Sigmoid colon (tissue), 7 donors: ENCODE measurements at regions of chr10 and their contacts with region 1.

Region 1: DNA sequence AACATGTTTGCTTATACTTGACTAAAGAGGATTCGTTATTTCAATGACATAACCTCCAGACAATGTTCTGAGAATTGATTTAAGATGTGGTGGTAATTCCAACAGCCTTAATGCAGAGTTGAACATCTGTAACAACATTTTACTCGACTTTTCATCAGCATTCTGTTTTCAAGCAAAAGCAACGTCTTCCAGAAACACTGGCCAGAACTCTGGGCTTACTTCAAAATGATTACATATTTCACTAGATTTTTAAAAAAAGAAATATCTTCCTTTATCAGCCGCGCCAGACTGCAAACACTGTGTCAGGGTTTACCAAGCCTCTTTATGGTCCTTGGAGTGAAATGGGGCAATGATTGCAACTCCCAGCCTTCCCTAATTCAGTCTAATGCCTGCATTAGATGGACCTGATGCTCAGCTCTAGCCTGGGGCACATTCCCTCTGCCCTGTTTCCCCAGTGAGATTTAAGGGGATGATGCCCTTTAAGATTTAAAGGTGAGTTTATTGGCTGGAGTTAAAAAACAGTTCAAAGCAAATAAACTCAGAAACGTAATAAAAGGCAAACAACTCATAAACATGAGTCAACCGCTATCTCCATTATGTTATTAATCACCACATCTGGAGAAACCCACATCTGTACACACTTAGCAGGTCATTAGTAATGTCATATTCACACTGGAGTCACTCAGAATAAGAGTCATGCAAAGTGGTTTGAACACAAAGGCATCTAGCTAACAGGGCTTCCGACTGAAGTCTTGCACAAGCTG is 663.9 kb downstream of the KCNMA1 start:
- DNase-seq: peak; percentile 77
- H3K4me3 ChIP-seq: no peak overlapping the region
- H3K27ac ChIP-seq: peak overlapping the region in 3 of 4 donors; percentile 70 to 76 (median 72)
- H3K4me1 ChIP-seq: peaks cover 0 to 89% (median 78%) of the 10 kb centered on the region in 4 donors
- H3K27me3 ChIP-seq: no peaks in the 10 kb centered on the region
- CTCF ChIP-seq: no peak
- EP300 ChIP-seq: peak in 2 of 4 donors; percentile 8 to 14
- POLR2A ChIP-seq: no peak

Region 2: GRCh38 chr10:76397181-76397881 is 576.4 kb before region 1 on chr10:
- intact Hi-C with region 1: loop called (anchors 1 kb)
- DNase-seq: peak; percentile 94
- H3K4me3 ChIP-seq: peak overlapping the region in 1 of 4 donors; percentile 2
- H3K27ac ChIP-seq: peak overlapping the region; percentile 75 to 83 (median 76)
- H3K4me1 ChIP-seq: peaks cover 0 to 61% (median 32%) of the 10 kb centered on the region in 4 donors
- H3K27me3 ChIP-seq: no peaks in the 10 kb centered on the region
- CTCF ChIP-seq: no peak
- EP300 ChIP-seq: peak in 3 of 4 donors; percentile 10 to 46 (median 39)
- POLR2A ChIP-seq: no peak

Region 3: DNA sequence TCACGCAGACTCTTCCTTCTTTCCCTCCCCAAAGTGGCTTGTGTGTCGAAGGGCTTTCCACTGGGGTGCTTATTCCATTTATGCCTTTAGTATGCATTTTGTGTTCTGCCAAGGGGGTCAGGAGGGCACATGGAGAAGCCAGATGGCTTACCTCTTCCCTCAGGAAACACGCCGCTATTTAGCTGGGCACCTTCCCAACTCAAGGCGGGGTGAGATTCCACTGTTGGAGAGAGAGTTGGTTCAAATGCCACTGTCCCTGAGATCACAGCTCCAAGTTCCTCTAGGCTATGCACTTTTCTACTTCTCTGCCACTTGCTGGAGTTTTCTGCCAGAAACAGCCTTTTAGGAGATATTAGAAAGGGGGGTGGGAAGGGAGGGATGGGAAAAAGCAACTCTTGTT is 450.5 kb before region 1 on chr10:
- intact Hi-C with region 1: loop called (anchors 2 kb)
- DNase-seq: peak; percentile 78
- H3K4me3 ChIP-seq: no peak overlapping the region
- H3K27ac ChIP-seq: peak overlapping the region; percentile 60 to 80 (median 78)
- H3K4me1 ChIP-seq: peaks cover 0 to 30% (median 25%) of the 10 kb centered on the region in 4 donors
- H3K27me3 ChIP-seq: no peaks in the 10 kb centered on the region
- CTCF ChIP-seq: no peak
- EP300 ChIP-seq: no peak
- POLR2A ChIP-seq: no peak

Region 4: DNA sequence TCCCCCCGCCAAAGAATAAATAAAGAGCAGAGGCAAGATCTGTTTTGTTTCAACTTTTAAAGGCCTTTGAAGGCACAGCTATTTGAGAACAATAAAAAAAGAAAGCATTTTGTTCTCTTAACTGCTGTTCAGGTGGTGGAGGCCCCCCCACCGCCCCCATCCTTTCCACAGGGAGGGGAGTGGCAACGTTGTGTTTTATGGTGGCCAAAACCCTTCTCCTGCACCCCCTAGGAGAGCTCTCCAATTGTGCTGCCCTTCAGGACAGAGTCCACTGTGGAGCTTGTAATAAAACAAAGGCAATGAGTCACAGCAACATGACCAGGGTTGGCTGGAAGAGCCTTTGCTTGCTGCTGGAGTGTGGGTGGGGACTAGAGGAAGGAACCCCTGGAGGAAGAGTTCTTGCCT is 324.0 kb before region 1 on chr10:
- intact Hi-C with region 1: loop called (anchors 5 kb)
- DNase-seq: peak; percentile 93
- H3K4me3 ChIP-seq: no peak overlapping the region
- H3K27ac ChIP-seq: peak overlapping the region in 3 of 4 donors; percentile 77 to 81 (median 80)
- H3K4me1 ChIP-seq: peaks cover 0 to 72% (median 42%) of the 10 kb centered on the region in 4 donors
- H3K27me3 ChIP-seq: no peaks in the 10 kb centered on the region
- CTCF ChIP-seq: no peak
- EP300 ChIP-seq: peak; percentile 49 to 90 (median 68)
- POLR2A ChIP-seq: no peak

Region 5: GRCh38 chr10:76769582-76769981 is 204.1 kb before region 1 on chr10:
- intact Hi-C with region 1: no loop called
- DNase-seq: no peak
- H3K4me3 ChIP-seq: no peak overlapping the region
- H3K27ac ChIP-seq: peak overlapping the region in 3 of 4 donors; percentile 6 to 38 (median 36)
- H3K4me1 ChIP-seq: peaks cover 0 to 16% (median 8%) of the 10 kb centered on the region in 4 donors
- H3K27me3 ChIP-seq: no peaks in the 10 kb centered on the region
- CTCF ChIP-seq: no peak
- EP300 ChIP-seq: no peak
- POLR2A ChIP-seq: no peak

Region 6: DNA sequence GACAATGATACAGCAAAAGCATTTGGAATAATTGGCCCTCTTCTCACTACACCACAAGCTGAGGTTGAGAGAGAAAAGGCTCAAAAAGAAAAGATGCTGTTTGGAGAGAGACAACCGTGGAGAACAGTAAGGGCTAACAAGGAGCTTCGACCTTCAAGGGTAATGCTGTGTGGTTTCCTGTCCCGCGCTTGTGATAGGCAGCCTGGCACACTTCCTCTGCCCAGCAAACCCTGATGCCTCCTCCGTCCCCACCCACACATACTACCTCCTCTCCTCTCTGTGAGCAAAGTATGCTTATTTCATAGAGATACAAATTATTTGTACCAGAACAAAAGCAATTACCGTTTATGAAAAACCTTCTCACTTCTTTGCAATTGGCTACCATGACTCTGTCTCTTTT is 91.5 kb before region 1 on chr10:
- intact Hi-C with region 1: loop called (anchors 5 kb)
- DNase-seq: no peak
- H3K4me3 ChIP-seq: no peak overlapping the region
- H3K27ac ChIP-seq: no peak overlapping the region
- H3K4me1 ChIP-seq: peaks cover 0 to 49% (median 30%) of the 10 kb centered on the region in 4 donors
- H3K27me3 ChIP-seq: no peaks in the 10 kb centered on the region
- CTCF ChIP-seq: no peak
- EP300 ChIP-seq: no peak
- POLR2A ChIP-seq: no peak

Region 7: GRCh38 chr10:76922666-76923065 is 51.0 kb before region 1 on chr10:
- intact Hi-C with region 1: no loop called
- DNase-seq: no peak
- H3K4me3 ChIP-seq: no peak overlapping the region
- H3K27ac ChIP-seq: peak overlapping the region in 3 of 4 donors; percentile 47 to 73 (median 62)
- H3K4me1 ChIP-seq: peaks cover 0 to 48% (median 36%) of the 10 kb centered on the region in 4 donors
- H3K27me3 ChIP-seq: no peaks in the 10 kb centered on the region
- CTCF ChIP-seq: no peak
- EP300 ChIP-seq: no peak
- POLR2A ChIP-seq: no peak

Region 8: DNA sequence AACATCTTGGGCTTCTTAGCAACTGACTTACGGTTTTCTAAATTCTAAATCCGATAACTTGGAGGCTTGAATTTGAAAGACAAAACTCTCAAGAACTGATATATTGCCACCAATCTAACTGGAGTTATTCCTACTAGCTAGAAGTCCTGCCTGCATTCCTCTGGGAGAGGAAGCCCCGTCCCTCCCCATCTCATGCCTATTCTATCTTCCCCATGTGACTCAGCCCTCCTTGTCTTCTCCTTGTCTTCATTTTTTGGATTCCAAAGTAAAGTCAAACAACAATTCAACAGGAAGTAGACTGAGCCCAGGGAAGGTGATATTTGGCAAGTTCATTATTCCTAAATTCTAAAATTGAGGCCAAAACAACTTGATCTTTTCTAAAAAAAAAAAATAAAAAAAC is 76.2 kb after region 1 on chr10:
- intact Hi-C with region 1: no loop called
- DNase-seq: no peak
- H3K4me3 ChIP-seq: no peak overlapping the region
- H3K27ac ChIP-seq: no peak overlapping the region
- H3K4me1 ChIP-seq: peaks cover 0 to 18% (median 8%) of the 10 kb centered on the region in 4 donors
- H3K27me3 ChIP-seq: no peaks in the 10 kb centered on the region
- CTCF ChIP-seq: no peak
- EP300 ChIP-seq: no peak
- POLR2A ChIP-seq: no peak

Region 9: GRCh38 chr10:77889277-77889903 is 915.7 kb after region 1 on chr10:
- intact Hi-C with region 1: no loop called
- DNase-seq: no peak
- H3K4me3 ChIP-seq: no peak overlapping the region
- H3K27ac ChIP-seq: peak overlapping the region; percentile 73 to 81 (median 78)
- H3K4me1 ChIP-seq: peaks cover 0 to 82% (median 76%) of the 10 kb centered on the region in 4 donors
- H3K27me3 ChIP-seq: no peaks in the 10 kb centered on the region
- CTCF ChIP-seq: no peak
- EP300 ChIP-seq: no peak
- POLR2A ChIP-seq: no peak